HCT116 (cell line): ENCODE measurements at regions of chr6 and their contacts with region 1.

Region 1: GRCh38 chr6:99119109-99120031 is 171.6 kb upstream of the FBXL4 start:
- DNase-seq: peak; percentile 12
- ATAC-seq: peak; percentile 78
- H3K4me3 ChIP-seq: no peak overlapping the region
- H3K27ac ChIP-seq: no peak overlapping the region
- H3K4me1 ChIP-seq: no peaks in the 10 kb centered on the region
- H3K27me3 ChIP-seq: peaks cover 43% of the 10 kb centered on the region
- CTCF ChIP-seq: peak; percentile 50 to 73 (median 53); a peak in 4 of 6 replicates
- POLR2A ChIP-seq: no peak
- RAD21 ChIP-seq: peak; percentile 81

Region 2: GRCh38 chr6:97705568-97705967 is 1413.8 kb before region 1 on chr6:
- CTCF ChIA-PET with region 1: no interaction called
- POLR2A ChIA-PET with region 1: no interaction called
- RAD21 ChIA-PET with region 1: no interaction called
- intact Hi-C with region 1: loop called (anchors 5 kb)
- DNase-seq: peak; percentile 7
- ATAC-seq: peak; percentile 54
- H3K4me3 ChIP-seq: no peak overlapping the region
- H3K27ac ChIP-seq: no peak overlapping the region
- H3K4me1 ChIP-seq: no peaks in the 10 kb centered on the region
- H3K27me3 ChIP-seq: no peaks in the 10 kb centered on the region
- CTCF ChIP-seq: peak; percentile 40 to 66 (median 46); a peak in 4 of 6 replicates
- POLR2A ChIP-seq: no peak
- RAD21 ChIP-seq: peak; percentile 59

Region 3: DNA sequence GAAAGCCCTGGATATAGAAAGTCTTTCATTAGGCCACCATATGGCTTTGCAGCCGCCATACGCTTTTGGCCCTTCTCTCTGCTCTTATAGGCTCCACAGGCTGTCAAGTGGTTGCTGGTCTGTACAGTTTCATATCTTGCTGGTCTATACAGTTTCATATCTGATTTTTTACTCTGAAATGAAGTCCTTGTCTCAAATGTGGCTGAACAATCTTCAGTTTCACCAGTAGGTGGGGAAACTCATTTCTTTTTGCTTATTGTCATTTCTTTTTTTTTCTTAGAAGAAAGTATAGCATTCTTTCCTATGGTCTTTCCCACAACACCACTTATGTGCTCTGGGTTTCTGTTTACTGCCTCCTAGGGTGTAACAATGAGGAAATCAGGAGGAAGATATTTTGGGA is 1064.9 kb before region 1 on chr6:
- CTCF ChIA-PET with region 1: interaction called, 3 read pairs
- POLR2A ChIA-PET with region 1: no interaction called
- RAD21 ChIA-PET with region 1: no interaction called
- intact Hi-C with region 1: loop called (anchors 5 kb)
- DNase-seq: no peak
- ATAC-seq: 0 out of 2 replicates have a peak, but pooled peaks have one; percentile 32
- H3K4me3 ChIP-seq: no peak overlapping the region
- H3K27ac ChIP-seq: no peak overlapping the region
- H3K4me1 ChIP-seq: no peaks in the 10 kb centered on the region
- H3K27me3 ChIP-seq: peaks cover 5% of the 10 kb centered on the region; the same call in 1 of the 2 replicates
- CTCF ChIP-seq: peak in 2 of 3 experiments; percentile 11 to 43; a peak in 2 of 6 replicates
- POLR2A ChIP-seq: no peak
- RAD21 ChIP-seq: peak; percentile 35; the same call in 1 of the 2 replicates

Region 4: DNA sequence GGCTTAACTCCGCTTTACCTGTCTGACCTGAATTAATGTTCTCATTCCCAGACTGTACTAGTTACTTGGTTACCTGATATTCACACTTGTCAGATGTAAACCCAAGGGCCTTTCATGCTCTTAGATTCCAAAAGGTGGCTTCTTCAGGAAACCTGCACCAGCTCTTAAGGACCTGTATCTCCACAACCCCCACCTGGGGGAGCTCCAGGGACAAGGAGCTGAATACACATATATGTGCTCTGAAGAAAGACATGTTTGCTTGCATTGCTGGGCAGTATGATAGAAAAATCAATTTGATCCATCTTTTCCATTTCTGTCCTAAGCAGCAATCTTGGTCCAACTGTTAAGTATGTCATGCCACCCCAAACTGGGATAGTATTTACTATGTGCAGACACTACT is 349.8 kb before region 1 on chr6:
- CTCF ChIA-PET with region 1: interaction called, 16 read pairs
- POLR2A ChIA-PET with region 1: no interaction called
- RAD21 ChIA-PET with region 1: interaction called in 1 of 2 experiments, 4 read pairs
- intact Hi-C with region 1: loop called (anchors 1 kb)
- DNase-seq: peak; percentile 40
- ATAC-seq: peak; percentile 85
- H3K4me3 ChIP-seq: no peak overlapping the region
- H3K27ac ChIP-seq: no peak overlapping the region
- H3K4me1 ChIP-seq: no peaks in the 10 kb centered on the region
- H3K27me3 ChIP-seq: peaks cover 23% of the 10 kb centered on the region
- CTCF ChIP-seq: peak; percentile 31 to 50 (median 49); a peak in 5 of 6 replicates
- POLR2A ChIP-seq: no peak
- RAD21 ChIP-seq: peak; percentile 53

Region 5: DNA sequence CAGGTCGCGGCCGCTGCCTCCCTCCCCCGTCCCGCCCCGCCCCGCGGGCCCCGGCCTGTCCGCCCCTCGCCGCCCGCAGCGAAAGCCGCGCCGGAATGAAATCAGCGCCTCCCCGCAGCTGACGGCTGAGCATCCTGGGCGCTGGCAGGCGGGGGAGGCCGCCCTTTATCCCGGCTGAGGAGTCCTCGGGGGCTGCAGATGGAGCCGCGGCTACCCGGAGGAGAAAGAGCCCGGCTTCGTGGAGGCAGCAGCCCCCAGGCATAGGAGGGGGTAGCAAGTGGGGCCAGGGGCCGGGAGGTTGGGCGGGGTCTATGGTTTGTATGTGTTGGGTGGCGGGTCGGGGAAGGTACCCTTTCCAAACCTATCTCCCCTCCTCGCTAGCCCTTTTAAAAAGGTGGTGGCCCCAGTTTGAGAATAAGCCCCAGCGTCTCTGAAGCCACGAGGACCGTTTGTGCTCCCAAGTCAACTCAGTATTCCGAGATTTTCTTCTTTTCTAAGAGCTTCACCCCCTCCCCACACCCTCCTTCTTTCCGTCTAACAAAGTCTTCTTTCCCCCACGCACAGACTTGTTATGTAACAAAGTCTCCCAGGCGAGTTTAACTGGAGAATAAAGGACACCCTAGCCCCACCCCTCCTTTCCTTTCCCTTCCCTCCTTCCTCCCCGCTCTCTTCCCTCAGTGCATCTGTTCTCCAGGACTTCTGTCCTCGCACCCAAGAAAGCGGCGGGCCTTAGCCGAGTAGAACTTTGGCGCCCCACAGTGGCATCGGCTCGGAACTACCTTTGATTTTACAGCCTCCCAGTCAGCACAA is 274.0 kb before region 1 on chr6:
- CTCF ChIA-PET with region 1: no interaction called
- POLR2A ChIA-PET with region 1: no interaction called
- RAD21 ChIA-PET with region 1: no interaction called
- intact Hi-C with region 1: loop called (anchors 5 kb)
- DNase-seq: peak; percentile 34
- ATAC-seq: peak; percentile 97
- H3K4me3 ChIP-seq: no peak overlapping the region
- H3K27ac ChIP-seq: no peak overlapping the region
- H3K4me1 ChIP-seq: no peaks in the 10 kb centered on the region
- H3K27me3 ChIP-seq: no peaks in the 10 kb centered on the region
- CTCF ChIP-seq: peak; percentile 57 to 91 (median 84); a peak in 5 of 6 replicates
- POLR2A ChIP-seq: no peak
- RAD21 ChIP-seq: peak; percentile 80